PC-3 (cell line): ENCODE measurements at regions of chr10 and their contacts with region 1.

Region 1: GRCh38 chr10:51879238-51879637 is 179.8 kb upstream of the CSTF2T start:
- DNase-seq: peak; percentile 99
- ATAC-seq: peak; percentile 99
- H3K4me3 ChIP-seq: no peak overlapping the region
- H3K27ac ChIP-seq: peak overlapping the region; percentile 82
- H3K4me1 ChIP-seq: peaks cover 12% of the 10 kb centered on the region
- H3K27me3 ChIP-seq: no peaks in the 10 kb centered on the region
- CTCF ChIP-seq: no peak

Region 2: GRCh38 chr10:51892965-51893658 is 13.9 kb after region 1 on chr10:
- CTCF ChIA-PET with region 1: no interaction called
- POLR2A ChIA-PET with region 1: no interaction called
- intact Hi-C with region 1: loop called (anchors 1 kb)
- DNase-seq: peak; percentile 85
- ATAC-seq: peak; percentile 93
- H3K4me3 ChIP-seq: no peak overlapping the region
- H3K27ac ChIP-seq: no peak overlapping the region
- H3K4me1 ChIP-seq: no peaks in the 10 kb centered on the region
- H3K27me3 ChIP-seq: no peaks in the 10 kb centered on the region
- CTCF ChIP-seq: peak; percentile 98